Left ventricle myocardium inferior (tissue), 1 donor: ENCODE measurements at regions of chr9 and their contacts with region 1.

Region 1: GRCh38 chr9:9170439-9171134 is 1371.0 kb upstream of the DMAC1 start:
- DNase-seq: no peak
- H3K4me3 ChIP-seq: no peak overlapping the region
- H3K27ac ChIP-seq: no peak overlapping the region
- H3K4me1 ChIP-seq: no peaks in the 10 kb centered on the region
- H3K27me3 ChIP-seq: no peaks in the 10 kb centered on the region
- CTCF ChIP-seq: no peak

Region 2: DNA sequence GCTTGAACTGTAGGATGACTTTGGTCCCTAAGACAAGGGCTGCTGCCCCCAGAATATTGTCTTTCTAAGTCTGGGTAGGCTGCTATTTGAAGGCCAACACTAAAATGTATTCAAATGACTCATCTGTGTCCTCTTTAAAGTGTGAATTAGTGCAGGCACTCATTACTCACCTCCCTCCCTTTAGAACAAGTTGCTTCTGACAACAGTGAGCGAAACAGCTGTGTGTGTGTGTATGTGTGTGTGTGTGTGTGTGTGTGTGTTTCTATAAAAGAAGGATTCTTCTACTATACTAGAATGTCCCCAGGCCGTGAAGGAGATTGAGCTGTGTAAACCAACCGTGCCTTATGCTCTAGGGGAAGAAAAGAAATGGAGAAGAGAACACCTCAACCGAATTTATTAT is 105.0 kb after region 1 on chr9:
- intact Hi-C with region 1: loop called (anchors 10 kb)
- DNase-seq: no peak
- H3K4me3 ChIP-seq: no peak overlapping the region
- H3K27ac ChIP-seq: no peak overlapping the region
- H3K4me1 ChIP-seq: no peaks in the 10 kb centered on the region
- H3K27me3 ChIP-seq: no peaks in the 10 kb centered on the region
- CTCF ChIP-seq: no peak